ENCODE measurements at regions of chr2 and their contacts with region 1.

Region 1: DNA sequence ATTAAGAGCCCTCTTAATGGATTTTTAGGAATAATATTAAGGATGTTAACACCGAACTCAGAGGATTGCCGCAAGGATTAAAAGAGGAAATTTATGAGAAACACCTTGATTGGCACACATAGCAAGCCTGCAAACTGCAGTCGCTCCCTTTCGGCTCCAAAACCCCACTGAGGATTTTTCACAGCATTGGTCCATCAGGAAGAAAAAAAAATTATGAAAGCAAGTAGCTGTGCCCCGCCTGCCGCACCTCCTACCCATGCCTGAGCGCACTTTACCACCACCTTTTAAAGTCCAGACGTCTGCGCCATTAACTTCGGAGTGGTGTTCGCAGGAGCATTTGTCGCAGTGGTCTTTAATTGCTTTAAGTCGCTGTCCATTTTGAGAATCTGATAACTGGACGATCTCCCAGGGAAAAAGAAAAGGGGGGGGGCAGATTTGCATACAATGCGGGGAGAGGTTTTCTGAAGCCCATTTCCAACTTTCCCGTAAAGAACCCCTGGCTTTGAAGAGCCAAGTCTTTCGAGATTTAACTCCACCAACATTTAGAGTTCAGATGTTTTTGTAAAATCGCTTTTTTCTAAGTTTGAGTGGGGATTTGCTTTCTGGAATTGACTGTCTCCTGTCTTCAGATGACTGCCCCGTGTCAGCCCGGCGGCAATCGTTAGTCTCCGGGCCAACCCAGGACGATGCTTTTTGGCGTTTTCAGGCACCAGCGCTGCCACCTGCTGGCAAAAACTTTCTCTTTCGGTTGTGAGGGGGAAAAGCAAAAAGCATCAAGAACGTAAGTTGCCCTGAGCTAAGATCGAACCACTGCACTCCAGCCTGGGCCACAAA is 914 bp upstream of the TRABD2A start:
- DNase-seq: no peak
- H3K4me3 ChIP-seq: peak overlapping the region; percentile 43 to 46
- H3K27ac ChIP-seq: peak overlapping the region; percentile 15
- H3K4me1 ChIP-seq: peaks cover 23% of the 10 kb centered on the region
- H3K27me3 ChIP-seq: no peaks in the 10 kb centered on the region
- CTCF ChIP-seq: peak; percentile 30 to 64 (median 45)
- POLR2A ChIP-seq: no peak

Region 2: GRCh38 chr2:84495539-84496146 is 386.2 kb before region 1 on chr2:
- intact Hi-C with region 1: loop called (anchors 5 kb)
- DNase-seq: no peak
- H3K4me3 ChIP-seq: no peak overlapping the region
- H3K27ac ChIP-seq: no peak overlapping the region
- H3K4me1 ChIP-seq: no peaks in the 10 kb centered on the region
- H3K27me3 ChIP-seq: no peaks in the 10 kb centered on the region
- CTCF ChIP-seq: peak in 2 of 3 experiments; percentile 17 to 58
- POLR2A ChIP-seq: no peak

Region 3: GRCh38 chr2:84800194-84800805 is 81.5 kb before region 1 on chr2:
- intact Hi-C with region 1: no loop called
- DNase-seq: no peak
- H3K4me3 ChIP-seq: no peak overlapping the region
- H3K27ac ChIP-seq: no peak overlapping the region
- H3K4me1 ChIP-seq: no peaks in the 10 kb centered on the region
- H3K27me3 ChIP-seq: no peaks in the 10 kb centered on the region
- CTCF ChIP-seq: no peak
- POLR2A ChIP-seq: no peak

Region 4: DNA sequence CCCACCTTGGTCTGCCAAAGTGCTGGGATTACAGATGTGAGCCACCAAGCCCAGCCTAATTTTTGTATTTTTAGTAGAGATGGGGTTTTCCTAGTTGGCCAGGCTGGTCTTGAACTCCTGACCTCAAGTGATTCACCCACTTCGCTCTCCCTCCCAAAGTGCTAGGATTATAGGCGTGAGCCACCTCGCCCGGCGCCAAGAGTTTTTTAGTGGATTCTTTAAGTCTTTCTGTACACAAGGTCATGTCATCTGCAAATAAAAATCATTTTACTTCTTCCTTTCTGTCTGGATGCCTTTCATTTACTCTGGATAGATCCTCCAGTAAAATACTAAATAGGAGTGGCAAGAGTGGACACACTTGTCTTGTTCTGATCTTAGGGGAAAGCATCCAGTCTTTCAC is 150.8 kb after region 1 on chr2:
- intact Hi-C with region 1: no loop called
- DNase-seq: no peak
- H3K4me3 ChIP-seq: no peak overlapping the region
- H3K27ac ChIP-seq: no peak overlapping the region
- H3K4me1 ChIP-seq: peaks cover 6% of the 10 kb centered on the region
- H3K27me3 ChIP-seq: no peaks in the 10 kb centered on the region
- CTCF ChIP-seq: no peak
- POLR2A ChIP-seq: no peak

Region 5: GRCh38 chr2:85475799-85476490 is 594.1 kb after region 1 on chr2:
- intact Hi-C with region 1: no loop called
- DNase-seq: no peak
- H3K4me3 ChIP-seq: no peak overlapping the region
- H3K27ac ChIP-seq: no peak overlapping the region
- H3K4me1 ChIP-seq: peaks cover 9% of the 10 kb centered on the region
- H3K27me3 ChIP-seq: no peaks in the 10 kb centered on the region
- CTCF ChIP-seq: no peak
- POLR2A ChIP-seq: no peak

Measured in vagina (tissue), 2 donors.